PC-3 (cell line): ENCODE measurements at regions of chr4 and their contacts with region 1.

Region 1: GRCh38 chr4:124334119-124334518 is 378.4 kb downstream of the ANKRD50 start:
- DNase-seq: peak; percentile 83
- ATAC-seq: peak; percentile 94
- H3K4me3 ChIP-seq: 0 out of 2 replicates have a peak overlapping the region, but pooled peaks have one; percentile 2
- H3K27ac ChIP-seq: peak overlapping the region; percentile 1; the same call in 1 of the 2 replicates
- H3K4me1 ChIP-seq: peaks cover 8% of the 10 kb centered on the region; the same call in 1 of the 2 replicates
- H3K27me3 ChIP-seq: no peaks in the 10 kb centered on the region
- CTCF ChIP-seq: peak; percentile 58

Region 2: DNA sequence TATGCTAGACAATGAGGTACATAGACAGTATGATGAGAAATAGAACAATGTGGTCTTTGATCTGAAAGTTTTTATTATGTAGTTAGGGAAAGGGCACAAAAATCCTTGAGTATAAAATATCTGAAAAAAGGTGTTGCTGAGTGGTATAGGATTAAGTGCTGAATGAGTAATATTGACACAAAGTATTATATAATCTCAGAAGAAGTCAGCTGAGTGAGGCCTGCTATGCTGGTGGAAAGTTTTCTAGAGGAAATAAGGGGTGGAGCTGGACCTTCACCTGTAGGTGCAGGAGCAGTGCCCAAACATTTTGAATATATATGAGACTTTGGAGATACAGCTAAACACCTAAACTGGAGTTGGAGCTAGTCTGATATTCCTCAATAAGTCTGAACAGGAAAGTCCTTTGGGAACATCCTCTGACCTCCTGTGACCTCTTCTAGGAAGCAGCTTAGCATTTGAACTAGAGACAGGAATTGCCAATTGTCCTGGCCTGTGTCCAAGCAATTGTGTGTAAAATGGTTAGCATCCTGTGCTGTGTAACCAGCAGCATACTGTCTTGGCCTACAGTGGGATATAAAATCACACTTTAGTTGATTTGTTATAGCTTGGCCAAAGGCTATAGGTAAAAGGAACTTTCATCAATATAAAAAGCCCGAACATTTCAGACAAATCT is 93.1 kb after region 1 on chr4:
- CTCF ChIA-PET with region 1: interaction called, 4 read pairs
- POLR2A ChIA-PET with region 1: no interaction called
- intact Hi-C with region 1: loop called (anchors 2 kb)
- DNase-seq: peak; percentile 56
- ATAC-seq: peak; percentile 60
- H3K4me3 ChIP-seq: no peak overlapping the region
- H3K27ac ChIP-seq: peak overlapping the region; percentile 77
- H3K4me1 ChIP-seq: peaks cover 61% of the 10 kb centered on the region
- H3K27me3 ChIP-seq: no peaks in the 10 kb centered on the region
- CTCF ChIP-seq: no peak

Region 3: DNA sequence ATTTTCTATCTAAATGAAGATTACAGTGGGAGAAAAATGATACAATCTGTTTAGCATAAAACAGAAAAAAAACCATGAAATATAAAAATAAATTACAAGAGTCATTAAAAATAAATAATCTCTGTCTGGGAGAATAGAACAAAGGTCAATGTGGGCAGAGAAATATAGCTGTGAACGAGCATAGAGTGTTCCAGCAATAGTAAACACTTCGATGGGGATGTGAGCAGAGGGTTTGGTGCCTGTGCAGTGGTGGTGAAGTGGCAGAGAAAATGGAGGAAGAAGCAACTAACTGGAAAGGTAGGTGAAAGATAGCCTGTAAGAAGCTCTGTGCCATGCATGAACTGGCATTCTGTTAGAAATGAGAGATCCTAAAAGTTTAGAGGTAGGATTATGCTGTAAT is 313.5 kb after region 1 on chr4:
- CTCF ChIA-PET with region 1: no interaction called
- POLR2A ChIA-PET with region 1: no interaction called
- intact Hi-C with region 1: loop called (anchors 5 kb)
- DNase-seq: no peak
- ATAC-seq: no peak
- H3K4me3 ChIP-seq: no peak overlapping the region
- H3K27ac ChIP-seq: no peak overlapping the region
- H3K4me1 ChIP-seq: peaks cover 7% of the 10 kb centered on the region
- H3K27me3 ChIP-seq: no peaks in the 10 kb centered on the region
- CTCF ChIP-seq: no peak

Region 4: GRCh38 chr4:124940387-124940786 is 606.3 kb after region 1 on chr4:
- CTCF ChIA-PET with region 1: no interaction called
- POLR2A ChIA-PET with region 1: no interaction called
- intact Hi-C with region 1: loop called (anchors 2 kb)
- DNase-seq: peak; percentile 88
- ATAC-seq: peak; percentile 37
- H3K4me3 ChIP-seq: no peak overlapping the region
- H3K27ac ChIP-seq: peak overlapping the region; percentile 98
- H3K4me1 ChIP-seq: peaks cover 66% of the 10 kb centered on the region
- H3K27me3 ChIP-seq: no peaks in the 10 kb centered on the region
- CTCF ChIP-seq: no peak

Region 5: GRCh38 chr4:125283707-125284279 is 949.7 kb after region 1 on chr4:
- CTCF ChIA-PET with region 1: no interaction called
- POLR2A ChIA-PET with region 1: no interaction called
- intact Hi-C with region 1: loop called (anchors 1 kb)
- DNase-seq: peak; percentile 39
- ATAC-seq: no peak
- H3K4me3 ChIP-seq: no peak overlapping the region
- H3K27ac ChIP-seq: no peak overlapping the region
- H3K4me1 ChIP-seq: 0 out of 2 replicates have a peak, but pooled peaks cover 5% of the 10 kb centered on the region
- H3K27me3 ChIP-seq: no peaks in the 10 kb centered on the region
- CTCF ChIP-seq: peak; percentile 73